ENCODE measurements at regions of chr3 and their contacts with region 1.

Region 1: GRCh38 chr3:157089455-157090221 is 70.3 kb downstream of the CCNL1 start:
- DNase-seq: peak; percentile 29
- H3K4me3 ChIP-seq: peak overlapping the region; percentile 76
- H3K27ac ChIP-seq: peak overlapping the region; percentile 100
- H3K4me1 ChIP-seq: peaks cover 68% of the 10 kb centered on the region
- H3K27me3 ChIP-seq: no peaks in the 10 kb centered on the region
- CTCF ChIP-seq: no peak

Region 2: GRCh38 chr3:157127831-157128767 is 38.5 kb after region 1 on chr3:
- intact Hi-C with region 1: loop called (anchors 5 kb)
- DNase-seq: no peak
- H3K4me3 ChIP-seq: no peak overlapping the region
- H3K27ac ChIP-seq: peak overlapping the region; percentile 89
- H3K4me1 ChIP-seq: peaks cover 59% of the 10 kb centered on the region
- H3K27me3 ChIP-seq: no peaks in the 10 kb centered on the region
- CTCF ChIP-seq: no peak